ENCODE measurements at regions of chr20 and their contacts with region 1.

Region 1: GRCh38 chr20:50724851-50725721 is 6.3 kb upstream of the PARD6B start:
- DNase-seq: peak; percentile 71 to 93 (median 88)
- H3K4me3 ChIP-seq: no peak overlapping the region
- H3K27ac ChIP-seq: peak overlapping the region; percentile 3 to 13
- H3K4me1 ChIP-seq: peaks cover 5% of the 10 kb centered on the region
- H3K27me3 ChIP-seq: no peaks in the 10 kb centered on the region
- CTCF ChIP-seq: no peak
- EP300 ChIP-seq: no peak
- POLR2A ChIP-seq: no peak

Region 2: DNA sequence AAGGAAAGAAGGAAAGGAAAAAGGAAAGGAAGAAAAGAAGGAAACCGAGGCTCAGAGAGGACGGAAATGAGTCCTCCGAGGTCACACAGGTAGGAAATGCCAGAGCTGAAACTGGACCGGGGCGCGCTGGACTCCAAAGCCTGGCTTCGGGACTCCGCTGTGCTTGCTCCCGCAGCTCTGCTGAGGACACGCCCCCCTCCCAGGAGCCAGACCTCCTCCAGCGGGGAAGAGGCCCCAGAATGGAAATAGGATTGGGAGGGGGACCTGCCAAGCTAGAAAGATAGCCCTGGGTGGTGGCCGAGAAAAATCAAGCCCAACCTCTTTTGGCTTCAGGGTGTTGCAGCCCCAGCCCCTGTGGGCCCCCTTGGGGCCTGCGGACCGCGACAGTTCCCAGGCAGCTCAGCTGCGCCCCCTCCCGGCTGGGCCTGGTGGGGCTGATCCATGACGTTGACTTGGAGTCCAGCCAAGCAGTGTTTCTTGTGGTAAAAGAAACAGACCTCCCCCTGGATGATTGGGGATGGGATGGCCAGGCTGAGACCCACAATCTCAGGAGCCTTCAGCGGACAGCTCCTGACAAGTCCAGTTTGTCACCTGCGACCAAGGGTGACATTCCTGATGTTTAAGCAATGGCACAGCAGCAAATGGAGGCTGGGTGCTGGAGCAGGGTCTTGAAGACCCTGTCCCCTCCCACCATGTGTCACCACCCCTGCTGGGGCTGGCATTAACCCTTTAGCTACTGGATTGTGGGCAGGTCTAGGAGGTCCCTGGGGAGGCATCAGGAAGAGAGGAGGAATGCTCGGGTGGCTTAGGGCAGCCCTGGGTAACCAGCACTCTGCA is 89.2 kb before region 1 on chr20:
- intact Hi-C with region 1: loop called in 1 of 4 experiments (anchors 5 kb)
- DNase-seq: peak; percentile 65 to 82 (median 72)
- H3K4me3 ChIP-seq: no peak overlapping the region
- H3K27ac ChIP-seq: no peak overlapping the region
- H3K4me1 ChIP-seq: peaks cover 13% of the 10 kb centered on the region
- H3K27me3 ChIP-seq: no peaks in the 10 kb centered on the region
- CTCF ChIP-seq: peak; percentile 34 to 66 (median 53)
- EP300 ChIP-seq: no peak
- POLR2A ChIP-seq: no peak